ENCODE measurements at regions of chr1 and their contacts with region 1.

Region 1: DNA sequence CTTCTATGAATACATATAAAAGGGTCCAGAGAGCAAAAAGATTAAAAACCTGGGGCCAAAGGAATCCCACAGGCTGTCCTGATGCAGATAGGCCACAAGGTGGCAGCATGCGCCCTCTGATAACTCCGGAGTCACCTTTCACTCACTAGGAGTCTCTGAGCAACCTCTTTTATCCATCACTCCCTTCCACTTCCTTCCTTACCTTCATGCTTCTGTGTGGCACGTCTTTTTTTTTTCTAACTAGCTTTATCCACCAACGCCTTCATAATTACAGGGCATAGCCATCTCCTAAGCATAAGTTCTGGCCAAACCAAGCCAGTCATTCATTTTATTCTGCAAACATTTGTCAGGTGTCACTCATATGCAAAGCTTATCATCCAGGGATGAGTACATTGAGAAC is 3.9 kb upstream of the PGLYRP4 start:
- DNase-seq: peak; percentile 75
- H3K4me3 Mint-ChIP-seq: no peak overlapping the region
- H3K27ac Mint-ChIP-seq: no peak overlapping the region
- H3K4me1 Mint-ChIP-seq: peaks cover 6% of the 10 kb centered on the region
- H3K27me3 Mint-ChIP-seq: peaks cover 7% of the 10 kb centered on the region

Region 2: DNA sequence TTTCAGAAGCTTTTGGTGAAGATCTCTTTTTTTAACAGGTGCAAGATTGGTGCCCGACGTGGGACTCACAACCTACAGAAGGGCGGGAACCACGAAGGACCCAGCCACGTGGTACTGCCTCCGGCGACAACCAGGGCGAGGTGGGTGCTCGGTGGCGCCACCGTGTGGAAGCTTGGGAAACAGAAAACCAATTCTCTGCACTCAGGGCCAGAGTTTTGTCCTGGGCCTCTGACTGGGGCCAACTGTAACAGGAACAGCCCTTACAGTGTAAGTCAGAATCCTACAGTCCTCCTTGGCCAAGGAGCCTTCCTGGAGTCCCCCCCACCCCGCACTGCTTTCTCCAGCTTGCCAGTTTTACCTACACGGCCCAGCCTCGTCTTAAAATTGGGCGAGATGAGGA is 52.2 kb after region 1 on chr1:
- CTCF ChIA-PET with region 1: interaction called, 22 read pairs
- POLR2A ChIA-PET with region 1: no interaction called
- intact Hi-C with region 1: loop called (anchors 1 kb)
- DNase-seq: peak; percentile 75
- H3K4me3 Mint-ChIP-seq: no peak overlapping the region
- H3K27ac Mint-ChIP-seq: no peak overlapping the region
- H3K4me1 Mint-ChIP-seq: peaks cover 8% of the 10 kb centered on the region
- H3K27me3 Mint-ChIP-seq: peaks cover 13% of the 10 kb centered on the region